Heart right ventricle (tissue), 16 donors: ENCODE measurements at regions of chr7 and their contacts with region 1.

Region 1: DNA sequence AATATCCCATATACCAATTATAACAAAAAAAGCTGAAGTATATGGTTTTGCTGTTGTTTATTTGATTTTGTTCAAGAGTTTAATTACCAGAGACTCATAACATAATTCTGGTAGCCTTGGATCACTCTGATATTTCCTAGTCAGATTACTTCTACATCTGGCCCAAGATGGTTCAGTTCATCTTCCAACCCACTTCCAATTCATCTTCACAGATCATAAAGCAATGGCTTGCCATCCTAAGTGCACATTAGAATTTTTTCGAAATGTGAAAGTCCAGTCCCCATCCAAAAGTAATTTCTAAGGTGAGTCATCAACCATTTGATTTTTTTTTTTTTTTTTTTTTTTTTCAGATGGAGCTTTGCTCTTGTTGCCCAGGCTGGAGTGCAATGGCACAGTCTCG is 8.0 kb upstream of the HIBADH start:
- DNase-seq: no peak
- ATAC-seq: no peak
- H3K4me3 ChIP-seq: no peak overlapping the region
- H3K27ac ChIP-seq: no peak overlapping the region
- H3K4me1 ChIP-seq: no peaks in the 10 kb centered on the region
- H3K27me3 ChIP-seq: no peaks in the 10 kb centered on the region
- CTCF ChIP-seq: no peak

Region 2: DNA sequence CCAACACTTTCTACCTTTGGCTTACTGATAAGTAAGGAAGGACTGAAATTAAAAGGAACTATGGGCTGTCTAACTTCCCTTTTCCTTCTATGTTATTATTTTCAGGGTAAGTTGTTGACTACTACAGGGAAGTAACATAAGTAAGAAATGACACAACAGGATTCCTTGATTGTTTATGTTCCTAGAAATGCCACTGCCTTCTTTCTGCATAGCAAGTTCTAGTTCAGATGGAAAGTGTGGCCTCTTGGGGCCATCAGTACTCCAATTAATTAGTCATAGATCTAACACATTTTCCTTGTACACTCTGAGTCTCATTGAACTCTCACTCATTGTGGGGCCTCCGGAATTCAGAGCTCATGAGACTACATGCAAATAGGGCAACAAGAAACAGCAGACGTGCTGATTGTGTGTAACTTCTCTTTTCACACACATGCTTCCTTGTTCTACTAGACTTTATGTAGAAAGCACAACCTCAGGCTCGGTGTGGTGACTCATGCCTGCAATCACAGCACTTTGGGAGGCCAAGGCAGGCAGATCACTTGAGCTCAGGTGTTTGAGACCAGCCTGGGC is 27.3 kb after region 1 on chr7:
- intact Hi-C with region 1: no loop called
- DNase-seq: no peak
- ATAC-seq: peak in 3 of 8 donors; percentile 39 to 58 (median 40)
- H3K4me3 ChIP-seq: no peak overlapping the region
- H3K27ac ChIP-seq: peak overlapping the region in 1 of 10 donors; percentile 83
- H3K4me1 ChIP-seq: peaks cover 0 to 32% (median 0%) of the 10 kb centered on the region in 9 donors
- H3K27me3 ChIP-seq: no peaks in the 10 kb centered on the region
- CTCF ChIP-seq: no peak

Region 3: DNA sequence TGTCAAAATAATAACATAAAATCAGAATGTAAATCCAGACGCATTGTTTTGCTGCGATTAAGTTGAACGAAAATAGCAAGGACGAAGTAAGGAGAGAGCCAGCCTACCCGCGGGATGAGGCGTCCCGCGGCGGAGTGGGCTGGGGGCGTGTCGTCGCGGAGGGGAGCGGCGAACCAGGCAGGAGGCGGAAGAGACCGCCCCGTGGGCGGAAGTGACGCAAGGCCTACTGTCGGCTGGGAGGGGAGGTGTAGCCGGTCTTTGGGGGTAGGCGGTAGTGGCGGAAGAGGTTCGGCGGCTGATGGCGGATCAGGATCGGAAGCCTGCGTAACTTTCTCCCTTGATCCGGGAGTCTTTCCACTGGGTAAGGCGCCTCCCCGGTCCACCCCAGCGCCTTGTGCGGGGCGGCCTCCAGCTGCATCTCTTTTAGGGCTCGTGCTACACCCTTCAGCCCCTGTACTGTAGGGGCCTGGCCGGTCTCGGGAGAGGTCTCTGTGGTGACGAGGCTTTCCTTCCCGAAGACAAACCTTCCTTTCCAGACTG is 69.3 kb after region 1 on chr7 and contains the start of gene TAX1BP1:
- intact Hi-C with region 1: loop called in 1 of 10 experiments (anchors 5 kb)
- DNase-seq: peak; percentile 97
- ATAC-seq: peak; percentile 100
- H3K4me3 ChIP-seq: peak within 1 kb of the TSS; percentile 70 to 94 (median 89)
- H3K27ac ChIP-seq: peak within 1 kb of the TSS; percentile 89 to 99 (median 96)
- H3K4me1 ChIP-seq: peaks cover 6 to 43% (median 27%) of the 10 kb centered on the region in 9 donors
- H3K27me3 ChIP-seq: no peaks in the 10 kb centered on the region
- CTCF ChIP-seq: no peak
- total RNA-seq, gene TAX1BP1: 153 to 190 (median 169) TPM